CD4-positive, alpha-beta memory T cell (primary cell): ENCODE measurements at regions of chr1 and their contacts with region 1.

Region 1: DNA sequence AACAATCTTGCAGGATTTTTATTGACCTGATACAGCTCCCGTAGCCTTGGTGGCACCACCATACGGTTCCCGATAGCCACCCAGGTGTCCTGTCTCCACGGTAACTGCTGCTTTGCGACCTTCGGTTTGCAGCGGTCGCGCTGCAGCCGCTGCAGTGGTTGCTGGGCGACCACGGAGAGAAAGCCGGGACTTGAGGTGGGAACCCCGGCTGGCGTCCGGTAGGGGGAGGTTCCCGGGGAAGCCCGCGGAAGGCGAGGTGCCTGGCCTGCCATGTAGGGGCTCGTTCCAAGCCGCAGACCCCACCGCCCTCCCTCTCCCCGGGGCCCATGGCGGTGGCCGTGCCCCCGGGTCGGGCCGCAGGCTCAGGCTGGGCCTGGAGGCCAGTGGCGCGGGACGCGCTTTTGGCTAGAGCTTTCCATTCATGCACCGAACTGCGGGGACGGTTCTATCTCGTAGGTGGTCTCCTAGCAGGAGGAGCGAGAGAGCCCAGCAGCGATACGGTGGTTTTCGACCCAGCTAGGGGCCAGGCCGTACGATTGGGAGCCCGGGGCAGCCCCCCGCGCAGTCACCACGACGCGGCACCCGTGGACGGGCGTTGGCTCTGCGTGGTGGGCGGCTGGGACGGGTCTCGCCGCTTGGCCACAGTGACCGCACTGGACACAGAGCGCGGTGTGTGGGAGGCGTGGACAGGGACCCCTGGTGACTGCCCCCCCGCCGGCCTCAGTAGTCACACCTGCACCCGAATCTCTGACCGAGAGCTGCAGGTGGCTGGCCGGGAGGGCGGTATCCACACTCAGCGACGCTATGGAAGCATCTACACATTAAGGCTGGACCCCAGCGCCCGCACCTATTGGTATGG is at the start of gene KLHDC9:
- DNase-seq: peak; percentile 63 to 81 (median 69)
- H3K4me3 ChIP-seq: peak within 1 kb of the TSS; percentile 54 to 72
- H3K4me3 Mint-ChIP-seq: peak within 1 kb of the TSS; percentile 81 to 94 (median 88)
- H3K27ac ChIP-seq: peak within 1 kb of the TSS; percentile 55
- H3K27ac Mint-ChIP-seq: peak within 1 kb of the TSS; percentile 75 to 100 (median 98)
- H3K4me1 ChIP-seq: peaks cover 22% of the 10 kb centered on the region
- H3K4me1 Mint-ChIP-seq: peaks cover 12 to 27% (median 20%) of the 10 kb centered on the region in 4 donors
- H3K27me3 ChIP-seq: no peaks in the 10 kb centered on the region
- H3K27me3 Mint-ChIP-seq: peaks cover 0 to 2% of the 10 kb centered on the region in 2 donors
- total RNA-seq, gene KLHDC9: 0.52 to 0.53 TPM

Region 2: DNA sequence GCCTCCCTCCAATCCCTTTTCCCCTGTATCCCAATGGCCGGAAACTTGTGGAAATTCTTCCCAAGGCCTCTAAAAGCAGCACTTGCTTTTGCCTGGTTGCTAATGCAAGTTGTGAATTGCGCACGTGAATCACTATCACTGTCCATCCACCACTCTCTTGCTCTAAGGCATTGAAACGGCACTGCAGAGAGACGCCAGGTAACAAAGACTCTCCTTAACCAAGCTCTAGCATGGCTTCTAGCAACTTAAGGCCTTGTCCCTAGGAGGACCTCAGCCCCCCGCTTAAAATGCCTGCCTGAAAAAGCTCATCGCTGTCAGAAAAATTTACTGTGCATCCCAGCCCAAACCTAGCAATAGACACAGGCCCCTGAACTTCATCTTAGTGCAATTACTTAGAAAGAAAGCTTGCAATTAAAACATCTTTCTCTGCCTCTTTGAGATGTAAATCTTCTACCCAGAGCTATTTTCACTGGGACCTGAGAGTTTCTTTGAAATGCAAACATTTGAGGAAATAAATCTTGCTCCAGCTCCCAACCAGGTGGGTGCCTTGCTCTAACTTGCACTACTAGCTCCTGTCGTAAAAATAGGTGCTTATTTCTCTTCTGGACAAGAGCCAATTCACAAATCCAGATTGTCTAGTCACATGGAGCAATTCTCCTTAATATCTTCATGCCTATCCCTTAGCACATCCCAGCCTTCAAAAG is 110.9 kb before region 1 on chr1:
- CTCF ChIA-PET with region 1: interaction called, 47 read pairs
- POLR2A ChIA-PET with region 1: interaction called, 5 read pairs
- intact Hi-C with region 1: no loop called
- DNase-seq: no peak
- H3K4me3 ChIP-seq: no peak overlapping the region
- H3K4me3 Mint-ChIP-seq: no peak overlapping the region
- H3K27ac ChIP-seq: no peak overlapping the region
- H3K27ac Mint-ChIP-seq: no peak overlapping the region
- H3K4me1 ChIP-seq: peaks cover 8% of the 10 kb centered on the region
- H3K4me1 Mint-ChIP-seq: peaks cover 2 to 9% (median 6%) of the 10 kb centered on the region in 4 donors
- H3K27me3 ChIP-seq: no peaks in the 10 kb centered on the region
- H3K27me3 Mint-ChIP-seq: peaks cover 3 to 6% of the 10 kb centered on the region in 2 donors

Region 3: GRCh38 chr1:161021165-161021960 is 77.1 kb before region 1 on chr1:
- CTCF ChIA-PET with region 1: interaction called, 15 read pairs
- POLR2A ChIA-PET with region 1: interaction called, 17 read pairs
- intact Hi-C with region 1: no loop called
- DNase-seq: peak; percentile 88 to 98 (median 91)
- H3K4me3 ChIP-seq: peak overlapping the region; percentile 40 to 72
- H3K4me3 Mint-ChIP-seq: peak overlapping the region; percentile 89 to 97 (median 94)
- H3K27ac ChIP-seq: peak overlapping the region; percentile 72
- H3K27ac Mint-ChIP-seq: peak overlapping the region; percentile 86 to 99 (median 96)
- H3K4me1 ChIP-seq: peaks cover 36% of the 10 kb centered on the region
- H3K4me1 Mint-ChIP-seq: peaks cover 24 to 58% (median 35%) of the 10 kb centered on the region in 4 donors
- H3K27me3 ChIP-seq: no peaks in the 10 kb centered on the region
- H3K27me3 Mint-ChIP-seq: no peaks in the 10 kb centered on the region

Region 4: DNA sequence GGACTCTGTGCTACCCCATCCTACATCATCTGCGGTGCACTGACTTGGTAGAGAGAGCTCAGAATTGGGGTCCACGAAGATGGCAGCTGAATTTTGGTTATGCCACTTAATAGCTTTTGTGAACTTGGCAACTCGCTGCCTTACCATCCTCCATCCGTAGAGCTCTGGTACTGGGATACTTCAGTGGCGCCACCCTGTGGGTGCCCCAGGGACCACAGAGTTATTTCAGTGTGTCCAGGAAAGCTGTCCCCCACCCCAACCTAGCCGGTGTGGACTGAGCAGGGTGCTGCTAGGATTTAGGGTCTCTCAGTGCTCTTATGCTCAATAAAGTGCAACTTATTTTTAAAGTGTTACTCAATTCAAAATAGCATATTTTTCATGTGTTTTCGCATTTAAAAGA is 43.6 kb before region 1 on chr1:
- CTCF ChIA-PET with region 1: interaction called, 10 read pairs
- POLR2A ChIA-PET with region 1: interaction called, 8 read pairs
- intact Hi-C with region 1: no loop called
- DNase-seq: no peak
- H3K4me3 ChIP-seq: no peak overlapping the region
- H3K4me3 Mint-ChIP-seq: no peak overlapping the region
- H3K27ac ChIP-seq: no peak overlapping the region
- H3K27ac Mint-ChIP-seq: peak overlapping the region in 3 of 7 donors; percentile 17 to 24 (median 18)
- H3K4me1 ChIP-seq: peaks cover 31% of the 10 kb centered on the region
- H3K4me1 Mint-ChIP-seq: peaks cover 14 to 43% (median 24%) of the 10 kb centered on the region in 4 donors
- H3K27me3 ChIP-seq: no peaks in the 10 kb centered on the region
- H3K27me3 Mint-ChIP-seq: no peaks in the 10 kb centered on the region

Region 5: DNA sequence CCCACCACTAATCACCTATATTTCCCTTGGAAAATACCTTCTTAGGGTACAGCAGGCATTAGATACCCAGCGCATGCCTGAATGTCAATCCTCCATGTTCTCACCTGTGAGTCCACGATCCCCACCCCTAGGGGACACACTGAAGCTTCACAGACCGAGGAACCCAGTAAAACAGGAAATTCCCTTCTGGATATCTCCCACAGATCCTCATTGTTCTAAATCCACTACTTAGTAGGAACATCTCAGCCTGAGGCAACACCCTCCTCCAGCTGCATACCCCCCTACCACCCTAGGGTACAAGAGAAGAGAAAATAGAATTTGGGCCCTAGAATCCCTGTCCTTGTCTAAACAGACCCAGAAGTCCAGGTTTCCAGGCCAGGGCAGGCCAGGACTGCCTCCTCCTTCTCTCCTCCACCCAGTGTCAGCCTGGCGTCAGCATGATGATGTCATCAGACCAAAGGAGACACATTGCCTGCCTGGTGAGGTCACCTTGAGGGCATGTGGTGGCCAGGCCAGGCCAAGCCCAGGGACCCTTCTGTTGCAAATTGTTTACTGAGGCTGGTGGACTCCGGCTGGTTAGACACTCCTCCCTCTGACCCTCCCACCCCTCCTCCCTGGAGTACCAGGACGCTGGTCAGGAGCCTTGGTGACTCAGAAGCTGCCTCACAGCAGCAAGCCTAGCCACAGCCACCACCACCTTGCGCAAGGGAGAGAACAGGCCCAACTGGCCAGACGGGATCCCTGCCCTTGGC is 15.3 kb before region 1 on chr1:
- CTCF ChIA-PET with region 1: interaction called, 26 read pairs
- POLR2A ChIA-PET with region 1: interaction called, 4 read pairs
- intact Hi-C with region 1: no loop called
- DNase-seq: no peak
- H3K4me3 ChIP-seq: no peak overlapping the region
- H3K4me3 Mint-ChIP-seq: no peak overlapping the region
- H3K27ac ChIP-seq: no peak overlapping the region
- H3K27ac Mint-ChIP-seq: peak overlapping the region in 1 of 7 donors; percentile 19
- H3K4me1 ChIP-seq: no peaks in the 10 kb centered on the region
- H3K4me1 Mint-ChIP-seq: no peaks in the 10 kb centered on the region
- H3K27me3 ChIP-seq: no peaks in the 10 kb centered on the region
- H3K27me3 Mint-ChIP-seq: no peaks in the 10 kb centered on the region

Region 6: DNA sequence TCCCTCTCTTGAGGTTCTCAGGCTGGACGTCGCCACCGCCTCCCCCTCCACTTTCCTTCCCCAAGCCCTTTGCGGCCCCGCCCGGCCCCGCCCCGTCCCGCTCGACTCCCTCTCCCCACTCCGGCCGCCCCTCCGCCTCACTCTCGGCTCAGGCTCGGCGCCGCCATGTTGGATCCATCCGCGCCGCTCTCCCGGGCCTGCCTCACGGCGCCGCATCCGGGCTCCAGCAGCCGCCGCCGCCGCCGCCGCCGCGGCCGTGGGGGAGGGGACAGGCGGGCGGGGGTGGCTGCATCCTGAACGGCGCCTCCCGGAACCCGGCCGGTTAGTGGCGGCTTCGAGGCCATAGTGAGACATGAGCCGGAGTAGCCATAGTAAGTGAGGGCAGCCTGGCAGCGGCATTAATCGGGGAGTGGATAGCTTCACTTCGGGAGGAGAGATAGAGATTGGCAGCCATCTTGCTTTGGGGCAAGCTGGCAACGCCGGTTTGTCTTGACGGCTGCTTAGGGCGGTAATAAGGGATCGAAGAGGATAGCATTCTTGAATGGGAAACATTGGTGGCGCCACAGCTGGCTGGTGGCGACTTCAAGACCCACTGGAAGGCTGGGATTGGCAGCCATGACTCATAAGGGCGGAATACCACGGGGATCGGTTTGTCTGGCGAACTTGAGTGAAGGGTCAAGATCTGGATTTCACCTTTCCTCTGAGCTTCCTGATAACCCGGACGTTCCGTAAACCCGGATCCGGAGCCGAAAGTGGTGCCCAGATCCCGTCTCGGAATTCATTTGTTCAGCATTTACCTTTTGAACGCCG is 34.2 kb after region 1 on chr1 and contains the start of gene DEDD:
- CTCF ChIA-PET with region 1: interaction called, 14 read pairs
- POLR2A ChIA-PET with region 1: interaction called, 14 read pairs
- intact Hi-C with region 1: no loop called
- DNase-seq: peak; percentile 92 to 95 (median 93)
- H3K4me3 ChIP-seq: peak within 1 kb of the TSS; percentile 80 to 100
- H3K4me3 Mint-ChIP-seq: peak within 1 kb of the TSS in 1 of 8 donors; percentile 91
- H3K27ac ChIP-seq: peak within 1 kb of the TSS; percentile 95
- H3K27ac Mint-ChIP-seq: peak within 1 kb of the TSS in 3 of 7 donors; percentile 91 to 99 (median 95)
- H3K4me1 ChIP-seq: peaks cover 51% of the 10 kb centered on the region
- H3K4me1 Mint-ChIP-seq: peaks cover 29 to 43% (median 40%) of the 10 kb centered on the region in 4 donors
- H3K27me3 ChIP-seq: no peaks in the 10 kb centered on the region
- H3K27me3 Mint-ChIP-seq: no peaks in the 10 kb centered on the region
- total RNA-seq, gene DEDD: 39.1 to 41.4 TPM

Region 7: DNA sequence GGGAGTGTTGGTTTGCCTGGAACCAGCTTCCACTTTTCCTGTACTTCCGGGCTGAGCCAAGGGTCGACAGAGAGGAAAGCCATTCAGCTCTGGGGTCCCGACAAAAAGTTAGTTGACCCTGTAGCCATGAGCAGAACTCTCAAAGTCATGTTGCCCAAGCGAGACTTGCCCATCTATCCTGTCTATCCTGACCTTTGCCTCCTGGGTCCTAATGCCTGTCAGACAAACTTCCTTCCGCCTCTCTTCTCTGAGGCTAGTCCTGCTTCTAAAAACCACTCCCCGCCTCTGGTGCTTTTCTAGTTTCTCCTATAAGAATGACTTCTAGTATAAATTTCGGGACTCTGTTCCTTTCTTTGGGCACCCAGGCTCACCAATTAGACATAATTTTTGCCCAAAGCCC is 152.4 kb after region 1 on chr1:
- CTCF ChIA-PET with region 1: no interaction called
- POLR2A ChIA-PET with region 1: no interaction called
- intact Hi-C with region 1: no loop called
- DNase-seq: no peak
- H3K4me3 ChIP-seq: no peak overlapping the region
- H3K4me3 Mint-ChIP-seq: no peak overlapping the region
- H3K27ac ChIP-seq: no peak overlapping the region
- H3K27ac Mint-ChIP-seq: peak overlapping the region in 1 of 7 donors; percentile 50
- H3K4me1 ChIP-seq: no peaks in the 10 kb centered on the region
- H3K4me1 Mint-ChIP-seq: no peaks in the 10 kb centered on the region
- H3K27me3 ChIP-seq: no peaks in the 10 kb centered on the region
- H3K27me3 Mint-ChIP-seq: peaks cover 2 to 7% of the 10 kb centered on the region in 2 donors

Region 8: DNA sequence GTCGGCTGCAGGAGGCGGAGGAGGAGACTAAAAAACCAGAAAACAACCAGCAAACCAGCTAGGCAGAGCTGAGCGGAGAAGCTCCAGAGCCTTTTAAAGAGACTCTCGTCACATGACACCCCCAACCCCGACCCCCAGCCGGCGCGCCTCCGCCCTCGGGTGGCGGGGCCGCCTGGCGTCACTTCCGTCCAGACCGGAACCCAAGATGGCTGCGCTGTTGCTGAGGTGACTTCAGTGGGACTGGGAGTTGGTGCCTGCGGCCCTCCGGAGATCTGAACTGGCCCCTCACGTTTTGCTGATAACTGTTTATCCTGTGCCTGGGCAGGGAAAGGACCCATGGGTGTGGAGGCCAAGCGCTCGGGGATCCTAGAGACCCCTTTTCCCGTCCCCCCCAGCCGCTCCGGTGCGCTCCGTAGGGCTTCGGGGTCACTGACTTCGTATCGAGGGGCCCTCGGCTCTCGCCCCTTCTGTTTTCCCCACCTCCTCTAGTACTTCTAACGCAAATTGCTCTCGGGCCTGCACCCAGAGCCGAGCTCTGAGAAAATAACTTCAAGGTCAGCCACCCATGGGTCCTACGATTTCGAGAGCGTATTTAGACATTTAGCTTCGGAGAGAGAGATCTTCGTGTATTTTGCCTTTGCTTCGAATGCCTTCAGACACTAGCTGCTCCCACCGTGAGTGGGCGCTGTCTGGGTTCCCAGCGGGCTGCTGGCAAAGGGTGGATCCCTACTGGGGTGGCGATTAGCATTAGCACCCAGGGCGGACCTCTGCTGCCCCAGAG is 216.0 kb after region 1 on chr1 and contains the start of gene SDHC:
- CTCF ChIA-PET with region 1: no interaction called
- POLR2A ChIA-PET with region 1: no interaction called
- intact Hi-C with region 1: no loop called
- DNase-seq: peak; percentile 91 to 94 (median 92)
- H3K4me3 ChIP-seq: peak within 1 kb of the TSS; percentile 91 to 94
- H3K4me3 Mint-ChIP-seq: peak within 1 kb of the TSS; percentile 95 to 99 (median 98)
- H3K27ac ChIP-seq: peak within 1 kb of the TSS; percentile 98
- H3K27ac Mint-ChIP-seq: peak within 1 kb of the TSS; percentile 97 to 100 (median 99)
- H3K4me1 ChIP-seq: peaks cover 16% of the 10 kb centered on the region
- H3K4me1 Mint-ChIP-seq: peaks cover 15 to 38% (median 22%) of the 10 kb centered on the region in 4 donors
- H3K27me3 ChIP-seq: no peaks in the 10 kb centered on the region
- H3K27me3 Mint-ChIP-seq: no peaks in the 10 kb centered on the region
- total RNA-seq, gene SDHC: 106 to 108 TPM